HEK293 (cell line): ENCODE measurements at regions of chr17 and their contacts with region 1.

Region 1: GRCh38 chr17:43878260-43879175 is 28.8 kb downstream of the MPP2 start:
- H3K4me3 ChIP-seq: no peak overlapping the region
- H3K27ac ChIP-seq: no peak overlapping the region
- H3K4me1 ChIP-seq: no peaks in the 10 kb centered on the region; the same call in 1 of the 2 replicates
- CTCF ChIP-seq: peak; percentile 98

Region 2: DNA sequence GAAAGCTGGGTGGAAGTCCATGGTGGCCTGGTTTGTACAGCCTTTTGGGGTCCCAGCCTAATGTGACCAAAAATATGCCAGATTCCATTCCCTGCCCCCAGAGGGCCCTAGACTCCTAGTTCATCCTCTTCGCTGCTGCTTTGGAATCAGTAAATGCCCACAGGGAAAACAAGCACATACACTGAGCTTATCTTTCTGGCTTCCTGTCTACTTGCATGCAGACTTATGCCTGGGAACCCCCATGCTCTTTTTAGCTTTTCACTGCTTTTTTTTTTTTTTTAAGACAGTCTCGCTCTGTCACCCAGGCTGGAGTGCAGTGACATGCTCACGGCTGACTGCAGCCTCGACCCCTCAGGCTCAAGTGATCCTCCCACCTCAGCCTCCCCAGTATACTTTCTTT is 37.7 kb before region 1 on chr17:
- CTCF ChIA-PET with region 1: interaction called, 22 read pairs
- POLR2A ChIA-PET with region 1: no interaction called
- H3K4me3 ChIP-seq: no peak overlapping the region
- H3K27ac ChIP-seq: no peak overlapping the region
- H3K4me1 ChIP-seq: peaks cover 14% of the 10 kb centered on the region
- CTCF ChIP-seq: no peak

Region 3: DNA sequence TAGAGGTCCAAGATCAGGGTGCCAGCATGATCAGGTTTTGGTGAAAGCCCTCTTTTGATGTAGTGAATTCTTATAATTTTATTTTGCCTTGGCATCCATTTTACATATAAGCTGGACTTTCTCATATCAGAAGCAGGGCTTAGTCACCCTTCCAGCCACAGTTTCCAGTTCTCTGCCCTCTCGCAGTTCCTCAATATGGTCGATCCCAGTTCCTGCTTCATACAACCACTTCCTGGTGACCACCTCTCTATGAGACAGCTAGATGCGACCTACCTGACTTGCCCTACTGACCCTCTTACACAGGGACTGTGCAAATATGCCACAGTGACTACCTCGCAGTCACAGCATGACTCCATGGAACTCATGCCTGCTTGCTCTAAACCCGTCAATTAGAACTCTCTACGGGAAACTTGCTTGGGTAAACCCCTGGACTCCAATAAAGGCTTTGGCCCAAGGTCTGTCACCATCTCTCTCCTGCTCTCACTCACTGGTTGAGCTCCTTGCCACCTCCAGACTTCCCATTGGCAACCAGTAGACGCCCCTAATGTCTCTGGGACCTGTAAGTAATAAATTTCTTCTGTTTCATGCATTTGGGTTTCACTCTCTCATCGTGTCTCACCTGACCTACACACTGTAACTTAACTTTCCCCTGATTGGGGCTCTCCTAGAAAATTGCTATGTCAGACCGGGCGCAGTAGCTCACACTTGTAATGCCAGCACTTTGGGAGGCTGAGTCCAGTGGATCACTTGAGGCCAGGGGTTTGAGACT is 10.1 kb before region 1 on chr17:
- CTCF ChIA-PET with region 1: interaction called, 37 read pairs
- POLR2A ChIA-PET with region 1: interaction called, 3 read pairs
- H3K4me3 ChIP-seq: no peak overlapping the region
- H3K27ac ChIP-seq: no peak overlapping the region
- H3K4me1 ChIP-seq: no peaks in the 10 kb centered on the region
- CTCF ChIP-seq: no peak

Region 4: GRCh38 chr17:43907425-43907981 is 29.0 kb after region 1 on chr17 and contains the start of gene MPP2:
- CTCF ChIA-PET with region 1: interaction called, 53 read pairs
- POLR2A ChIA-PET with region 1: no interaction called
- H3K4me3 ChIP-seq: peak within 1 kb of the TSS; percentile 47
- H3K27ac ChIP-seq: peak within 1 kb of the TSS; percentile 51; the same call in 1 of the 2 replicates
- H3K4me1 ChIP-seq: peaks cover 12% of the 10 kb centered on the region; the same call in 1 of the 2 replicates
- CTCF ChIP-seq: 0 out of 2 replicates have a peak, but pooled peaks have one; percentile 62

Region 5: DNA sequence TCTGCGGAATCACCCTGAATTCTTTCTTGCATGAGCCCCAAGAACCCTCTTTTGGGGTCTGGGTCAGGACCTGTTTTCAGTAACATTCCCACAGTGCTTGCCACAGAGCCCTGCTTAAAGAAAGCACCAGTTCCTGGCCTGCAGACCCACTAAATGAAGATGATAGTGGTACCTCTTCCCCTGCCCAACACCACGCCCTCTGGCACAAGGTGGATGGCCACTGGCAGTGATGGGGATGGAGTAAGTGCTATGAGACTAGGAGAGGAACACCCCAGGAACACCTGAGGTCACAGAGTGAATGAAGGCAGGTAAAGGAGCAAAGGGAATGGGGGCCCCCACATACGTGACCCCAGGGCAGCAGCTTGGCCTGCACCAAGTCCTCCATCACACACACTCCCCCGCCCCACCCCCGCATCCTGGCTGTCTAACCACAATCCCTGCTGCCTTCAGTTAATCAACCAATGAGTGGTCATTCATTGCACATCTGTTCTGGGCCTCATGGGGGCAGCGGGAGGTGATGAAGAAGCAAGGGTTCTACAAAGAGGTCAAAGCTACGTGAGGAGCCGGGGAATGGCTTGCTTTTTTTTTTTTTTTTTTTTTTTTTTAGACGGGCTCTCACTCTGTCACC is 67.7 kb after region 1 on chr17:
- CTCF ChIA-PET with region 1: interaction called, 56 read pairs
- POLR2A ChIA-PET with region 1: no interaction called
- H3K4me3 ChIP-seq: no peak overlapping the region
- H3K27ac ChIP-seq: no peak overlapping the region
- H3K4me1 ChIP-seq: no peaks in the 10 kb centered on the region; the same call in 1 of the 2 replicates
- CTCF ChIP-seq: 0 out of 2 replicates have a peak, but pooled peaks have one; percentile 8

Region 6: DNA sequence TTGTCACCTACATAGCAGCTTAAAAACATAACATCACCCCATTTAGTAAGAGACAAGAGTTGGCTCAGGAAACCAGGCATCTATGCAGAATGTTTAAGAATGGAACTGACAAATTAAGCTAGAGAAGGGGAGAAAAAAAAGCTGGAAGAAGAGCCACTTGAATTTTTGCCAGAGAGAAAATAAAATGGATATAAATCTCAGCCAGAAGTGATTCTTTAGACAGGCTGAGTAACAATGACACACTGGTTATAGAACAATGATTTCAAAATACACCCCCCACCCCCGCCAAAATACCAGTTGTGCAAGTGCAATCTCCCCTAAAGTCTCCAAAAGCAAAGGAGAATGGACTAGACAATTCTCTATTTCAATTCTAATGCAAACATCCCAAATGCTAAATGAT is 165.5 kb after region 1 on chr17:
- CTCF ChIA-PET with region 1: interaction called, 51 read pairs
- POLR2A ChIA-PET with region 1: no interaction called
- H3K4me3 ChIP-seq: no peak overlapping the region
- H3K27ac ChIP-seq: no peak overlapping the region
- H3K4me1 ChIP-seq: peaks cover 11% of the 10 kb centered on the region
- CTCF ChIP-seq: no peak